HepG2 (cell line): ENCODE measurements at regions of chr17 and their contacts with region 1.

Region 1: DNA sequence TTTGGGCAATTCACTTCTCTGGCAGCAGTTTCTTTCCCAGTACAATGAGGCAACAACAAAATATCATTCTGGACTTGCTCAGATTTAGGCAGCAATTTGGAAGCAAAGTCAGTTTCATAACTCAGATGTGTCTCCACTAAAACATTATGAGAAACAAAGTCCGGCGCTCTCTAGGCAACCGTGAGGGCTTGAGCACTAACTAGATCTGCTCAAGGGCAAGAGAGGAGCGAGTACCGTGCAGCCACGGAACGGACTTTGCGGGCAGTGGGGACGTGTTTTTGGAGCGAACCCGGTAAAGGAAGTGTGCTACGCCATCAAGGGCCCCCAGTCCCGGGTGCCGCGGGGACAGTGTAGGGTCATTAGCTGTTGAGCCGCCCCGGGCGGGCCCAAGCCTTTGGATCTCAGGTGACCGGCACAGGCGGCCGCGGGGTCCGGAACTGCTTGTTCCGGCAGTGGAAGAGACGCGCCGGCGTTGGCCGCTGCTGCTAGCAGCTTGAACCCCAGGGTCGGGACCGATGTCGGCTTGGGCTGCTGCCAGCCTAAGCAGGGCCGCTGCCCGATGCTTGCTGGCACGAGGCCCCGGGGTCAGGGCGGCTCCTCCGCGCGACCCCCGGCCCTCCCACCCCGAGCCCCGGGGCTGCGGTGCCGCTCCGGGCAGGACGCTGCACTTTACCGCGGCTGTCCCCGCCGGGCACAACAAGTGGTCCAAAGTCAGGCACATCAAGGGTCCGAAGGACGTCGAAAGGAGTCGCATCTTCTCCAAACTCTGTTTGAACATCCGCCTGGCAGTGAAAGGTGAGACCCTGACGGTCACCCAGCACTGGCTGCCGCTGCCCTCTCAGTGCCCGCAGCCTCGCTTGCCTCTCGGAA is at the start of gene TACO1:
- DNase-seq: peak; percentile 83
- ATAC-seq: peak; percentile 94
- H3K4me3 ChIP-seq: peak within 1 kb of the TSS; percentile 78 to 90 (median 81)
- H3K27ac ChIP-seq: peak within 1 kb of the TSS; percentile 88
- H3K4me1 ChIP-seq: peaks cover 23% of the 10 kb centered on the region
- H3K27me3 ChIP-seq: no peaks in the 10 kb centered on the region; a peak in 1 of 5 replicates
- CTCF ChIP-seq: peak; percentile 41
- EP300 ChIP-seq: peak; percentile 74 to 81
- POLR2A ChIP-seq: peak; percentile 75 to 88
- RAD21 ChIP-seq: peak; percentile 75
- total RNA-seq, gene TACO1: 53.6 and 57.6 TPM in 2 replicates

Region 2: GRCh38 chr17:63113183-63113582 is 487.6 kb before region 1 on chr17:
- CTCF ChIA-PET with region 1: no interaction called
- POLR2A ChIA-PET with region 1: no interaction called
- in situ Hi-C with region 1: no loop called
- intact Hi-C with region 1: loop called (anchors 5 kb)
- DNase-seq: peak; percentile 19
- ATAC-seq: peak; percentile 50; the same call in 1 of the 3 replicates
- H3K4me3 ChIP-seq: no peak overlapping the region
- H3K27ac ChIP-seq: no peak overlapping the region
- H3K4me1 ChIP-seq: no peaks in the 10 kb centered on the region
- H3K27me3 ChIP-seq: no peaks in the 10 kb centered on the region
- CTCF ChIP-seq: peak; percentile 37; the same call in 1 of the 2 replicates
- EP300 ChIP-seq: no peak
- POLR2A ChIP-seq: no peak
- RAD21 ChIP-seq: no peak

Region 3: DNA sequence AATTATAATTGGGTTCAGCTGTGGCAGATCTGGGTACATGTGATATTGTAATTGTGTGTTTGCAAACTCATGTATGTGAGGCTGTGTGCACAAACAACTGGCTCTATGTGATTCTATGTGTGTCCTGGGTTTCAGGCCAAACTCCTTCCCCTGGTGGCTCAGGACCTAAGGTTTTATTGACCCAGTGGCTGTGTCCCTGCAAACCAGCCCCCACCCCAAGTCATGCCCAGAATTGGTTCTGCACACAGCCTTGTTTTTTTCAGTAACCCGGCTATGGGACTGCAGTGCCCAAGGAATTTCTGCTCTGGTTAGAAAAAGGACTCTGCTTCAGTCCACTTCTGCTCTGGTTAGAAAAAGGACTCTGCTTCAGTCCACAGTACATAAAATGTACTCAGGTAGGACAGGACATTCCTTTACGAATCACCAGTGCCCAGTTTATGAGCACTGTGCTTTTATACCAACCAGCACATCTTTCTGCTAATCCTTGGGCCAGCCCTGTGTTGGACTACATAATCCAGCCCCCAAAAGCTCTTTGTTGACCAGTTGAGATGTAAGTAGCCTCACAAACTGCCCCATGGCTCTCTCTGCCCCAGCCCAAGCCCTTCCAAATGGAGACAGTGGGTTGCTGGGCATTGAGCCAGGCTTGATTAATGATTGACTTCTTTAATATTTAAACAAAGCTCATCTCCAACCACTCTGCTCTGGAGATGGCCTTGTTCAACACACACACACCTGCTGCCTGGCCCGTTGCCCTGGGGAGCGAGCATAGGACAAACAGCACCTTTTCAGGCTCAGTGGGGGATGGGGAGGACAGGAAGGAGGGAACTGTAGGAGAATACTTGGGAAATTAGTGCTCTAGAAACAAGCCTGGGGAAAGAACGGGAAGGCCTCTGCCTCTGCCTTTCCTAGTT is 80.6 kb before region 1 on chr17:
- CTCF ChIA-PET with region 1: no interaction called
- POLR2A ChIA-PET with region 1: interaction called, 18 read pairs
- in situ Hi-C with region 1: no loop called
- intact Hi-C with region 1: no loop called
- DNase-seq: peak; percentile 96
- ATAC-seq: peak; percentile 84
- H3K4me3 ChIP-seq: peak overlapping the region in 1 of 3 experiments; percentile 47; a peak in 2 of 6 replicates
- H3K27ac ChIP-seq: peak overlapping the region; percentile 71
- H3K4me1 ChIP-seq: peaks cover 79% of the 10 kb centered on the region
- H3K27me3 ChIP-seq: peaks cover 7 to 55% of the 10 kb centered on the region in 2 experiments; a peak in 4 of 5 replicates
- CTCF ChIP-seq: no peak
- EP300 ChIP-seq: peak; percentile 49 to 88; a peak in 3 of 4 replicates
- POLR2A ChIP-seq: peak in 1 of 2 experiments; percentile 24; a peak in 2 of 4 replicates
- RAD21 ChIP-seq: no peak

Region 4: GRCh38 chr17:63579540-63580001 is 21.2 kb before region 1 on chr17:
- CTCF ChIA-PET with region 1: no interaction called
- POLR2A ChIA-PET with region 1: interaction called, 28 read pairs
- in situ Hi-C with region 1: no loop called
- intact Hi-C with region 1: no loop called
- DNase-seq: peak; percentile 83
- ATAC-seq: peak; percentile 58
- H3K4me3 ChIP-seq: peak overlapping the region in 2 of 3 experiments; percentile 8 to 33; a peak in 2 of 6 replicates
- H3K27ac ChIP-seq: peak overlapping the region; percentile 83
- H3K4me1 ChIP-seq: peaks cover 46% of the 10 kb centered on the region
- H3K27me3 ChIP-seq: no peaks in the 10 kb centered on the region
- CTCF ChIP-seq: peak; percentile 31; the same call in 1 of the 2 replicates
- EP300 ChIP-seq: peak in 1 of 2 experiments; percentile 53; a peak in 2 of 4 replicates
- POLR2A ChIP-seq: no peak
- RAD21 ChIP-seq: no peak